G401 (cell line): ENCODE measurements at regions of chr1 and their contacts with region 1.

Region 1: DNA sequence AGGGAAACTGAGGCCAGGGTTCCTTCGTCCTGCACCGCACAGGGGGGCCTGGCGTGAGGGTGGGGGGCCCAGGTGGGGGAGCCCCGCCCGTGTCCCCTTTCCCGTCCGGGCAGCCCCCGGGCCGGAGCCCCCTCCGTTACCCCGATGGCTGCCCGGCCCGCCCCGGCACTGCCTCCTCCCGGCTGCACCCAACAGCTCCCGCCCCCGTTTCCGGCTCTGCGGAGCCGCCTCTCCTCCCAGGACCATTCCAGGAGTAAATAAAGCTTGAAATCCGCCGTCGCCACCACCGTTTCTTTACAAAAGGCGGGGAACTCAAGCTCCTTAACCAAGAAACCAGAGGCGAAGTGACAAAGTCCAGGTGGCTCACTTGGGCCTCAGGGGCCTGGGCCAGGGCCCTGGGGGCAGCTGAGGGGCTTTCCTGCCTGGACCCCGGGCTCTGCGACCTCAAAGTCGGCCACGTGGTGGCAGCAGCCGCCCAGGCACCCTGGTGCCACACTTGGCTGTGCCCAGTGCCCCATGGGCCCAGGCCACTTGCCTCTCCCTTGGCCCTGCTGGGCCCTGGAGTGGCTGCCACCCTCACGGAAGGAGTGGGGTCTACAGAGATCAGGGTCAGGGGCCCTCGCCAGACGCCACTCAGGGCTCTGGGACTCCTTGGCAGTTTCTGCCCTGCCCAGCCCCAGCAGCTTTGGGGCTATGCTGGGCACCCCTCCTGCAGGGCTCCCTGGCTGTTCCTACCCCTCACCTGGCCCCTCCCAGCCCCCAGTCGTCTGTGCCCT is 514 bp upstream of the FAAP20 start:
- DNase-seq: peak; percentile 76

Region 2: DNA sequence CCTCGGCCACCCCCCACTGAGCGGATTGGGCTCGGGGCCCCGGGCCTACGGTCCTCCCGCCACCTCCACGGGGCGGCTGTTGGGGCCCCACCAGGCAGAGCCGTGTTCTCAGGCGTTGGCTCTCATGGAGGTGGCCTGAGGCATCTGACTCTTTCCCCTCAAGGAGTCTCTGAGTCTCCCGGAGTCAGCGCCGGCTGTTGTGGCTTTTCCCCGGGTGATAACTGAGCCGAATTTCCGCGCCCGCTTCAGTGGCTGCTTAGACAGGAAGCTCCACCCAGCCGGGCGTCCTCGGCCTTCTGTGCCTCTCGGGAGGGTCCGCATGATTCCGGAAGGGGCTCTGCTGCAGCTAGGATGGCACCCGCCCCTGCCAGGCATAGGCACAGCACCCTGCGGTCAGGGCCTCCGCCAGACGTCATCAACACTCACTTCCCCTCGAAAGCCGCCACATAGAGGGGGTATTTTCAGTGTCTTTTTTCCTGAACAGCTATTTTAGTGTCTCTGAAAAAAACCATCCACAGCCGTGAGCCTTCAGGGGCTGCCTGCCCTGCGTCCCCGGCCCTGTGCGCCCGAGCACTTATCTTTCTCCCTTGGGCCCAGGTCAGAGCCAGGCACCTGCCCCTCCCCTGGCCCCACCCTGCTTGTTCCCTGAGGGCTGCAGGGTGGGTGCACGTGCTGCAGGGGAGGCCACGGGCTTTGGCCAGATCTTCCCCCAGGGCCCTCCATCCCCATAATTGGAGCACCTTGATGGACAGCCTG is 105.9 kb after region 1 on chr1:
- in situ Hi-C with region 1: loop called (anchors 5 kb)
- DNase-seq: peak; percentile 74

Region 3: DNA sequence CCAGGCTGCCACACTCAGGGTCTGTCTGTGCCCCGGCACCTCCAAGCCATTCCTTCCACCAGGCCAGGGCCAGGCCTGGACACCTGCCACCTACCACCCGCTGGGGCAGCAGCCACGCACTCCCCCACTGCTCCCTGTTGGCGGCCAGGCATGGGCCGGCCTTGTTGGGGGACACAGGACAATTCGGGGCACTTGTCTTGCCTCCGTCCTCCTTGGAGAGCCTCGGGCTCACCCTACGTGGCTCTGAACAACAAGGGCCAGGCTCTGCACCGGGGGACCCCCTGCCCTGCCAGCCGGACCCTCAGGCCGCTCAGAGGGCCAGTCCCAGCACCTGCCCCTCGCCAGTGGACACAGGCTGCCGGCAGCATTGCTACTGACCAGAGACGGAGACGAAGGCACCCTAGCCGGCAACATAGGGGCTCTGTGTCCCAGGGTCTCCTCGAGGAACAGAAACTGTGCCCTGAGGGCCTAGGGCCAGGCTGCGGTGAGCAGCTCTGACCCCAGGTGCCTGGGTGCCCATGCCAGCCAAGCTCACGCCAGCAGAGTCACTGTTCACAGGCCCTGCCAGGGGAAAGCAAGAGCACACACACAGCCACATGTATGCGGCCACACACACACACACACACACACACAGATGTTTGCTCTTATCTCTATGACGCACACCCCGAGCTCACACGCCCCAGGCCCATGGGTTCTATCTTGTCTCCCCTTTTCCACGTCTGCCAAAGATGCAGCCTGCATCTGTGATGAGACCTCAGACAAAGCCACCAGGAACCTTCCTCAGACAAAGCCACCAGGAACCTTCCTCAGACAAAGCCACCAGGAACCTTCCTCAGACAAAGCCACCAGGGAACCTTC is 150.4 kb after region 1 on chr1:
- in situ Hi-C with region 1: loop called (anchors 5 kb)
- DNase-seq: no peak

Region 4: GRCh38 chr1:2360588-2361364 is 165.7 kb after region 1 on chr1:
- in situ Hi-C with region 1: no loop called
- DNase-seq: no peak